PC-3 (cell line): ENCODE measurements at regions of chr7 and their contacts with region 1.

Region 1: DNA sequence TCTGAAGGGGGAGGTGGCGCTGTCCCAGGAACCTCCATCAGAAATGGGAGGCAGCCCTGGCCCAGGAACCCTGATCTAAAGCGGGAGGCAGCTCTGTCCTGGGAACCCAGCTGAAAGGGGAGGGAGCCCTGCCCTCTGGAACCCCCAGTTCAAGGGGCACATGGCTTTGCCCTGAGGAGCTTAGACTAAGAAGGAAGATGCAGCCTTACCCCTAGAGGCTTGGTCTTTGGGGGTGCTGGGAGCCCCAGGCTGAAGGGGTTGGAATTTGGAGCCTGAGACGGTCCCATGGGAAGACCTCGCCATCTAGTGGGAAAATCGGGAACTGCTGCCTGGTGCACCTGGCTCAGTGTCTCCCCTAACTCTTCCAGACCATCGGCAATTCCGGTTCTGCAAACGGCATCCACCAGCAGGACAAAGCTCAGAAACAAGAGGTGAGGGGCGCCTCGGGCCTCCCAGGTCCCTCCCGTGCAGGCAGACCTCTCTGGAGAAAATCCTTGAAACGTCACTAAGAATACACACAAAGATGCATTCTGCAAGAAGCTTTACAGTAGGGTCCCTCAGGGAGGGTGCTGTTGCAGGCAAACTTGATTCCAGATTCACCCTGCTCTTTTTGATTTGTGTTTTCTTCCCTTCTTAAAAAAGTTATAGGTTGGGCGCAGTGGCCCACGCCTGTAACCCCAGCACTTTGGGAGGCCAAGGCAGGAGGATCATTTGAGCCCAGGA is 52.4 kb upstream of the GTF2IRD1 start:
- DNase-seq: peak; percentile 78
- ATAC-seq: peak; percentile 72
- H3K4me3 ChIP-seq: no peak overlapping the region
- H3K27ac ChIP-seq: no peak overlapping the region
- H3K4me1 ChIP-seq: no peaks in the 10 kb centered on the region
- H3K27me3 ChIP-seq: no peaks in the 10 kb centered on the region
- CTCF ChIP-seq: peak; percentile 95

Region 2: GRCh38 chr7:75565132-75565837 is 1164.0 kb after region 1 on chr7:
- CTCF ChIA-PET with region 1: no interaction called
- POLR2A ChIA-PET with region 1: interaction called, 14 read pairs
- intact Hi-C with region 1: no loop called
- DNase-seq: peak; percentile 96
- ATAC-seq: peak; percentile 89
- H3K4me3 ChIP-seq: peak overlapping the region; percentile 9; the same call in 1 of the 2 replicates
- H3K27ac ChIP-seq: peak overlapping the region; percentile 42
- H3K4me1 ChIP-seq: peaks cover 12% of the 10 kb centered on the region
- H3K27me3 ChIP-seq: no peaks in the 10 kb centered on the region
- CTCF ChIP-seq: no peak